HepG2 (cell line): ENCODE measurements at regions of chr6 and their contacts with region 1.

Region 1: GRCh38 chr6:127533011-127533410 is 13.9 kb upstream of the MTCL3 start:
- DNase-seq: no peak
- ATAC-seq: no peak
- H3K4me3 ChIP-seq: no peak overlapping the region
- H3K27ac ChIP-seq: no peak overlapping the region
- H3K4me1 ChIP-seq: no peaks in the 10 kb centered on the region
- H3K27me3 ChIP-seq: 0 out of 5 replicates have a peak, but pooled peaks cover under 1 to 1% of the 10 kb centered on the region in 2 experiments
- CTCF ChIP-seq: no peak
- EP300 ChIP-seq: no peak
- POLR2A ChIP-seq: no peak
- RAD21 ChIP-seq: no peak

Region 2: GRCh38 chr6:127506894-127507293 is 26.1 kb before region 1 on chr6:
- CTCF ChIA-PET with region 1: no interaction called
- POLR2A ChIA-PET with region 1: no interaction called
- in situ Hi-C with region 1: no loop called
- intact Hi-C with region 1: loop called (anchors 1 kb)
- DNase-seq: no peak
- ATAC-seq: no peak
- H3K4me3 ChIP-seq: no peak overlapping the region
- H3K27ac ChIP-seq: no peak overlapping the region
- H3K4me1 ChIP-seq: no peaks in the 10 kb centered on the region
- H3K27me3 ChIP-seq: no peaks in the 10 kb centered on the region
- CTCF ChIP-seq: no peak
- EP300 ChIP-seq: no peak
- POLR2A ChIP-seq: no peak
- RAD21 ChIP-seq: no peak

Region 3: DNA sequence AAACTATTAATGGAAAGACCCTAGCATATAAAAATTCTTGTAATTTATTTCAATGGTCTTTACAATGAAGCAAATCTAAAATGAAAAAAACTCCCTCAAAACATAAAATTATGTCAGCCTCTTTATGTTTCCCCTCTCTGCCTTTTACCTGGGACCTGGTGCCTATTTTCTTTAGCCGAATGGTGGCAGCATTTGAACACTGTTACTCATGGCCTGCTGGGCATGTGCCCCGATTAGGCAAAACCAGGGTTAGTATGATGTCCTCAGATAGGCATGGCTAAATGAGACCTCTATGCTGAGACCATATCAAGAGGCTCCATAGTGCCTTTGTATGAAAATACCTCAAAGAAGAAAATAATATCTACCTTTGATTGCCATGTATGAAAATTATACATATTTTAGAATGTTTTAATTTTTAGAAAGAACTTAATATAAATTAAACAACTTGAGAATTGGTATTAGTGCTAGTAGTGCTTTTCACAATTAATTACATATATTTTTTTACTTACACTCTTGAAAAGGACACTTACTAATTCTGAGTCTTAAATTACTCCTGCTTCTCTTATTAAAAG is 21.5 kb after region 1 on chr6:
- CTCF ChIA-PET with region 1: no interaction called
- POLR2A ChIA-PET with region 1: no interaction called
- in situ Hi-C with region 1: no loop called
- intact Hi-C with region 1: no loop called
- DNase-seq: peak; percentile 46
- ATAC-seq: peak; percentile 96
- H3K4me3 ChIP-seq: no peak overlapping the region
- H3K27ac ChIP-seq: no peak overlapping the region
- H3K4me1 ChIP-seq: no peaks in the 10 kb centered on the region
- H3K27me3 ChIP-seq: no peaks in the 10 kb centered on the region
- CTCF ChIP-seq: peak; percentile 73
- EP300 ChIP-seq: no peak
- POLR2A ChIP-seq: no peak
- RAD21 ChIP-seq: peak; percentile 36; the same call in 1 of the 2 replicates

Region 4: GRCh38 chr6:127592964-127593363 is 60.0 kb after region 1 on chr6:
- CTCF ChIA-PET with region 1: no interaction called
- POLR2A ChIA-PET with region 1: no interaction called
- in situ Hi-C with region 1: no loop called
- intact Hi-C with region 1: no loop called
- DNase-seq: no peak
- ATAC-seq: peak; percentile 80
- H3K4me3 ChIP-seq: no peak overlapping the region; a peak in 1 of 6 replicates
- H3K27ac ChIP-seq: no peak overlapping the region
- H3K4me1 ChIP-seq: peaks cover 7% of the 10 kb centered on the region; the same call in 1 of the 2 replicates
- H3K27me3 ChIP-seq: 0 out of 5 replicates have a peak, but pooled peaks cover 0 to 2% of the 10 kb centered on the region in 2 experiments
- CTCF ChIP-seq: no peak
- EP300 ChIP-seq: no peak
- POLR2A ChIP-seq: no peak
- RAD21 ChIP-seq: no peak